ENCODE measurements at regions of chr14 and their contacts with region 1.

Region 1: DNA sequence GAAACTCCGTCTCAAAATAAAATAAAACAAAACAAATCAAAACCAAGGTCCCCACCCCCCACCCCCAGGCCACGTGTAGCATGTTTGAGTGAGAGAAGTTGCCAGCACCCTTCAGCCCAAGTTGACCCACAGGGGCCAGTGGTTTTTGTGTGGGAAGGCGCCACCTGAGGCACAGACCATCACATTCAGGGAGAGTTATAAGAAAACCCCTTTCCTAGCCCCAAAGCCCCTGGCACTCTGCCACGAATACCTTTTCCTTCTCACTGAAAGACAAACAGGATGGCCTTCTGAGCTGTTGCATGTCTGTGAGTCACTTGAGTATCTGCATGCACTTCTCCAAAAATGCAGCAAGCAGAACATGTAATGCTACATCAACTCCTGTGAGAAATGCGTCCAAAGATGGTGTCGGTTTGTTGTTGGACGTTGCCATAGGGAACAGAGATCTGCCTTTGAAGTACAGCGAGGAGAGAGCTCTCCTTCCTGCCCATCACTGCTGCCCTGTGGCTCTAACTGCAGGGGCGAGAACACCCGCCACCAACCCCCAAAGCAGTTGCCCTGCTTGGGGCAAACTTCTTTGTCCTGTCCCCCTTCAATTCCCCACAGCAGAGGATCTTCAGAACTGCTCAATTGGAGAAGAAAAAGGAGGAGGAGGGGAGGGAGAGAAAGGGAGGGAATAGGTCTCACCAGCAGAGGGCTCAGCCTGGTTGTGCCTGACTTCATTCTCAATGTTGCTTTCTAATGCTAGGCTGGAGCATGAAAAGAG is 2.7 kb upstream of the TRAF3 start:
- DNase-seq: peak in 3 of 4 donors; percentile 51 to 84 (median 70)
- ATAC-seq: peak; percentile 80
- H3K4me3 ChIP-seq: no peak overlapping the region
- H3K27ac ChIP-seq: peak overlapping the region in 1 of 2 donors; percentile 53
- H3K4me1 ChIP-seq: peaks cover 5 to 32% of the 10 kb centered on the region in 2 donors
- H3K27me3 ChIP-seq: no peaks in the 10 kb centered on the region
- CTCF ChIP-seq: peak; percentile 58 to 70

Region 2: DNA sequence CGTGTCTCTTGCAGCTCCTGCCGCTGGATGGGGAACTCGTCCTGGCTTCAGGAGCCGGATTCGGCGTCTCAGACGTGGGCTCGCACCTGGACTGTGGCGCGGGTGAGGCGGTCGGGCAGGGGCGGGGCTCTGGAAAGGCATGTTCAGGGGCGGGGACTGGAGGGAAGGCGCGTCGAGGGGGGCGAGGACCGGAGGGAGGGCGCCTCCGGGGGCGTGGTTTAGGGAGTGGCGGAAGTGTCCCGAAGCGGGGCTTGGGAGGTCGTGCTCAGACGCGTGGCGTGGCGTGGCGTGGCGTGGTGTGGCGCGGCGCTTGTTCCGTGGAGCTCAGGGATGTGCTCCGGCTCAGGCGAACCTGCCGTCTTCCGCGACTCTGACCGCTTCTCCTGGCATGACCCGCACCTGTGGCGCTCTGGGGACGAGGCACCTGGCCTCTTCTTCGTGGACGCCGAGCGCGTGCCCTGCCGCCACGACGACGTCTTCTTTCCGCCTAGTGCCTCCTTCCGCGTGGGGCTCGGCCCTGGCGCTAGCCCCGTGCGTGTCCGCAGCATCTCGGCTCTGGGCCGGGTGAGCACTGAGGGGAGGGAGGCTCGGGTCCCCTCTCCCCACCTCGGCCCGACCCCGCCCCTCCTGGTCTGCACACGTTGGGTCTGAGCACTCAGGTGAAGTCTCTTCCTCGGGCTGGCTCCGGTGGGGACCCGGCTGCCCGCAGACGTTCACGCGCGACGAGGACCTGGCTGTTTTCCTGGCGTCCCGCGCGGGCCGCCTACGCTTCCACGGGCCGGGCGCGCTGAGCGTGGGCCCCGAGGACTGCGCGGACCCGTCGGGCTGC is 154.1 kb after region 1 on chr14:
- intact Hi-C with region 1: loop called in 1 of 2 experiments (anchors 10 kb)
- DNase-seq: peak; percentile 65 to 91 (median 84)
- ATAC-seq: peak; percentile 91
- H3K4me3 ChIP-seq: peak overlapping the region; percentile 34 to 44
- H3K27ac ChIP-seq: peak overlapping the region; percentile 57 to 78
- H3K4me1 ChIP-seq: peaks cover 21 to 36% of the 10 kb centered on the region in 2 donors
- H3K27me3 ChIP-seq: peaks cover 31 to 88% of the 10 kb centered on the region in 2 donors
- CTCF ChIP-seq: no peak

Measured in left lung (tissue), 14 donors.